ENCODE measurements at regions of chr5 and their contacts with region 1.

Region 1: GRCh38 chr5:131165119-131165727 is at the start of gene HINT1:
- DNase-seq: peak; percentile 98
- H3K4me3 Mint-ChIP-seq: peak within 1 kb of the TSS; percentile 76
- H3K27ac Mint-ChIP-seq: peak within 1 kb of the TSS; percentile 65
- H3K4me1 Mint-ChIP-seq: peaks cover 10% of the 10 kb centered on the region
- H3K27me3 Mint-ChIP-seq: no peaks in the 10 kb centered on the region
- CTCF ChIP-seq: peak; percentile 14
- total RNA-seq, gene HINT1: 444 and 575 TPM in 2 replicates

Region 2: GRCh38 chr5:131270809-131271208 is 105.6 kb after region 1 on chr5:
- CTCF ChIA-PET with region 1: interaction called, 7 read pairs
- POLR2A ChIA-PET with region 1: interaction called, 392 read pairs
- intact Hi-C with region 1: no loop called
- DNase-seq: peak; percentile 57
- H3K4me3 Mint-ChIP-seq: peak overlapping the region; percentile 13
- H3K27ac Mint-ChIP-seq: peak overlapping the region; percentile 33
- H3K4me1 Mint-ChIP-seq: peaks cover 47% of the 10 kb centered on the region
- H3K27me3 Mint-ChIP-seq: no peaks in the 10 kb centered on the region
- CTCF ChIP-seq: no peak

Region 3: GRCh38 chr5:131281133-131281867 is 116.1 kb after region 1 on chr5:
- CTCF ChIA-PET with region 1: interaction called, 4 read pairs
- POLR2A ChIA-PET with region 1: interaction called, 14 read pairs
- intact Hi-C with region 1: no loop called
- DNase-seq: peak; percentile 34
- H3K4me3 Mint-ChIP-seq: peak overlapping the region; percentile 51
- H3K27ac Mint-ChIP-seq: peak overlapping the region; percentile 84
- H3K4me1 Mint-ChIP-seq: peaks cover 33% of the 10 kb centered on the region
- H3K27me3 Mint-ChIP-seq: no peaks in the 10 kb centered on the region
- CTCF ChIP-seq: no peak

Region 4: GRCh38 chr5:131303537-131303936 is 138.3 kb after region 1 on chr5:
- CTCF ChIA-PET with region 1: no interaction called
- POLR2A ChIA-PET with region 1: interaction called, 15 read pairs
- intact Hi-C with region 1: loop called (anchors 1 kb)
- DNase-seq: peak; percentile 83
- H3K4me3 Mint-ChIP-seq: peak overlapping the region; percentile 10
- H3K27ac Mint-ChIP-seq: peak overlapping the region; percentile 97
- H3K4me1 Mint-ChIP-seq: peaks cover 67% of the 10 kb centered on the region
- H3K27me3 Mint-ChIP-seq: no peaks in the 10 kb centered on the region
- CTCF ChIP-seq: no peak

Region 5: GRCh38 chr5:131382407-131383395 is 217.5 kb after region 1 on chr5:
- CTCF ChIA-PET with region 1: interaction called, 16 read pairs
- POLR2A ChIA-PET with region 1: interaction called, 13 read pairs
- intact Hi-C with region 1: loop called (anchors 1 kb)
- DNase-seq: peak; percentile 81
- H3K4me3 Mint-ChIP-seq: no peak overlapping the region
- H3K27ac Mint-ChIP-seq: no peak overlapping the region
- H3K4me1 Mint-ChIP-seq: peaks cover 29% of the 10 kb centered on the region
- H3K27me3 Mint-ChIP-seq: no peaks in the 10 kb centered on the region
- CTCF ChIP-seq: peak; percentile 50

Region 6: DNA sequence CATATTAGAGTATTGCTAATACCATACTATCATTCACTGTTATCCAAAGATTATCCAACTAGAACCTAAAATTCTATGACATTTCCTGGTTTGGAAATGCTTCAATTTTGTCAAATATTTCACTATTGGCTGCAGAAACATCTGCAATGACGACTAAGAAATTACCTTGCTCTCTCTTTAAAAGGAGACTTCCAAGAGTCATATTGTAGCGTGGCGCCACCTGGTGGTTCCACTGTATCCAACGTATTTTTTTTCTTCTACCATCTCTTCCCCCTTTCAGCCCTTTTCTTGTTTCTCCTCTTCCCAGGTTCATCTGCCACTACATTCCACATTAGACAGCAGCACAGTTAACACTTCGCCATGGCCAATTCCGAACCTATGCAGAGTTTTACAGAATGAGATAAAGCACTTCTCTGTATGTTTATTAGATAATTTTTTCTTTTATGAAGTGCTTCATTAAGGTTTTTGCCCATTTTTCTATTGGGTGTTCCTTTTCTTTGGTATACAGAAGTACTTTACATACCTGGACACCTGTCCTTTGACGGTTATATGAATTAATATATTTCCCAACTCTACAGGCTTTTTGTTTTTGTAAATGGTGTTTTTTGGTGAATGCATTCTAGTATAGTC is 252.1 kb after region 1 on chr5:
- CTCF ChIA-PET with region 1: interaction called, 5 read pairs
- POLR2A ChIA-PET with region 1: interaction called, 6 read pairs
- intact Hi-C with region 1: loop called (anchors 1 kb)
- DNase-seq: peak; percentile 85
- H3K4me3 Mint-ChIP-seq: no peak overlapping the region
- H3K27ac Mint-ChIP-seq: no peak overlapping the region
- H3K4me1 Mint-ChIP-seq: peaks cover 5% of the 10 kb centered on the region
- H3K27me3 Mint-ChIP-seq: no peaks in the 10 kb centered on the region
- CTCF ChIP-seq: peak; percentile 89

Region 7: GRCh38 chr5:131783874-131784273 is 618.7 kb after region 1 on chr5:
- CTCF ChIA-PET with region 1: no interaction called
- POLR2A ChIA-PET with region 1: no interaction called
- intact Hi-C with region 1: no loop called
- DNase-seq: no peak
- H3K4me3 Mint-ChIP-seq: no peak overlapping the region
- H3K27ac Mint-ChIP-seq: peak overlapping the region; percentile 50
- H3K4me1 Mint-ChIP-seq: peaks cover 12% of the 10 kb centered on the region
- H3K27me3 Mint-ChIP-seq: no peaks in the 10 kb centered on the region
- CTCF ChIP-seq: no peak

Measured in MCF 10A (cell line).